ENCODE measurements at regions of chr15 and their contacts with region 1.

Region 1: DNA sequence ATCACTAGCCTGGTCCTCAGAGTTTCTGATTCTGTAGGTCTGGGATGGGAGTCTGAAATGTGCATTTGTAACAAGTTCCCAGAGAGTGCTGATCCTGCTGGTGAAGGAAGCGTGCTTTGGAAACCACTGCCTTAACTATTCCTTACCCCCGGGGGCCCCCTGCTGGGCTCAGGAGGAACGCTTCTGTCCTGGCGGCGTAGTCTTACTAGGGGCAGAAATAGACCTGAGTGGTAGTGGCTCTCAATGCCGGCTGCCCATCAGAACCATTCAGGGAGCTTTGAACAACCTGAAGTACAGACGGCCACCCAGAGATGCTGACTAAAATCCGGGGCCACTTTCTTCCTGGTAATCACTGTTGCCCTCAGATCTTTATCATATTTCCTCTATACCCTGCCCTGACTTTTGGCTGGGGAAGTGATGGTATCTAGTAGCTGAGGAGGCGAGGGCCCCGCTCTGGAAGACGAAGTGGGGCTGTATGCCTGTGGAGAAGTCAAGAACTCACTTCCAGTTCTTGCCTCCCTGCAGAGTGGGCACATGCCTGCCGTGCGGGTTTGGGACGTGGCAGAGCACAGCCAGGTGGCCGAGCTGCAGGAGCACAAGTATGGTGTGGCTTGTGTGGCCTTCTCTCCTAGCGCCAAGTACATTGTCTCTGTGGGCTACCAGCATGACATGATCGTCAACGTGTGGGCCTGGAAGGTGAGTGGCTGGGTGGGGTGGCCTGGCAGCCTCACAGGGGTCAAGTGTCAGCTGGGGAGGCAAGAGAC is 16.3 kb upstream of the JMJD7 start:
- DNase-seq: peak; percentile 70 to 71
- ATAC-seq: peak; percentile 96 to 98; a peak in 5 of 6 replicates
- H3K4me3 ChIP-seq: no peak overlapping the region
- H3K27ac ChIP-seq: no peak overlapping the region
- H3K4me1 ChIP-seq: no peaks in the 10 kb centered on the region
- CTCF ChIP-seq: peak; percentile 69
- EP300 ChIP-seq: no peak
- POLR2A ChIP-seq: no peak
- RAD21 ChIP-seq: peak; percentile 82 to 92

Region 2: DNA sequence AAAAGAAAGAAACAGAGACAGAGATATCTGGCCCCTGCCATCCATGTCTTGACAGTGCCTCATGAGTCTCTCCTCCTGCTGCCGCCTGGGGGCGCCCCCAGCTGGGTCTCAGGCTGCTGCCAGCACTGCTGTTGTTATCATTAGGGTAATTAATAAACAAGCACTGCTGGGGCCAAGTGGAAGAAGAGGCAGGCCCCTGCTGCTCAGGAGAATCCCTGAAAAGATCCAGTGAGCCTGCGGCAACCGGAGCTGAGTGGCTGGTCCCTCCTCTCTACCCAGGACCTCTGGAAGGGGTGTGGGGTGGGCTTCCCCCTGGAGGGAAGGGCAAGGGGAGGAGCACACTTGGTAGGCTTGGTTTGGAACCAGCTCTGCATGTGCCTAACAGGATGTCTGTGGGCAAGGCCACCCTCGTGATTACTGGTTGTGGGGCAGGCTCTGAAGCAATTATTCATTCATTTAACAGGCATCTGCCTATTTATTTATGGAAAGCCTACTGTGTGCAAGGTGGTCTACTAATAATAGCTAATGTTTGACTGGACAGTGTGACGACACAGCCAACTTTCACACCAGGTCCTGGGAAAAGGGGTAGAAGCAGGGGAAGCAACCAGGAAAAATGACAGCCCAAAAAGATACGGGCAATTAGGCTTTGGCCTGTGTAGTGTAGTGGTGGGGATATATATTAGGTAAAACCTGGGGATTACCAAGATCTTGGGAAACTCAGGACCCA is 253.8 kb before region 1 on chr15:
- CTCF ChIA-PET with region 1: interaction called, 17 read pairs
- POLR2A ChIA-PET with region 1: no interaction called
- DNase-seq: peak; percentile 57 to 67
- ATAC-seq: peak; percentile 61 to 89; a peak in 5 of 6 replicates
- H3K4me3 ChIP-seq: peak overlapping the region; percentile 82
- H3K27ac ChIP-seq: peak overlapping the region; percentile 81 to 98; a peak in 2 of 6 replicates
- H3K4me1 ChIP-seq: peaks cover 10% of the 10 kb centered on the region; the same call in 2 of the 3 replicates
- CTCF ChIP-seq: peak; percentile 66
- EP300 ChIP-seq: no peak
- POLR2A ChIP-seq: no peak
- RAD21 ChIP-seq: peak; percentile 58 to 61

Region 3: DNA sequence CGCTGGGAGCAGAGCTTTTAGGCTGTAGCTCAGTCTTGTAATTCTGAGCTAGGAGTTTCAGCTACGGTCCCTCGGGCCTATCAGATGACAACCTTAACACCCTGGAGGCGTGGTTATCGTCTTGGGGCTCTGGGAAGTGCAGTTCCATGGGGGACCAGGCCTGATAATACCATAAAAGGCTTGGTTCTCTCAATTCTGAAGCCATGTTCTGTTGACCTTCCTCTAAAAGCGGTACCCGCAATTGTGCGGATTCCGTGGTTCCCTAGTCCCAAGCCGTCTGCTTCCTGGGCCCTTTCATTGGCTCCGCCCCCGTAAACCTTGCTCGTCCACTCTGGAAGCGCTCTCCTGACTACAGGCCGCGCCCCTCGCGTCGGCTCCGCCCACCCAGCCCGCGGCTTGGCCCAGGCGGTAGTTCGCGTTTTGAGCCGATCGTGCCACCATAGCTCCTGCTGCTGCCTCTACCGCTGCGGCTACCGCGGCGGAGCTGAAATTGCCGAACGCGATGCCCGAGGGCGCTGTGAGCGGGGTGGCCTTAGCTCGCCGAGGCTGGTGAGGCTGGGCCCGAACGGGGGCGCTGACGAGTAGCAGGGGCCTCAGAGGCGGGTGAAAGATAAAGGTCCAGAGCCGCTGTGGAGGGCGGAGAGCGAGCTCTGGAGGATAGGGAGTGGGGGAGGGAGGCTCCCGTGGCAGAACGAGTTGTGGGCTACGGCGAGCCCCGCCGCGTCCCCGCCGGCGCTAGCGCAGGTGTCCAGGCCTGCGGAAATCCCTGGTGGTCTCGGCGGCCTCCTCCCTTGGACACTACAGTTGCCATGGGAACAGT is 37.3 kb before region 1 on chr15 and contains the start of gene MAPKBP1:
- CTCF ChIA-PET with region 1: interaction called, 103 read pairs
- POLR2A ChIA-PET with region 1: interaction called, 4 read pairs
- DNase-seq: peak; percentile 89 to 95
- ATAC-seq: peak; percentile 90 to 95
- H3K4me3 ChIP-seq: peak within 1 kb of the TSS; percentile 76
- H3K27ac ChIP-seq: peak within 1 kb of the TSS; percentile 81 to 96
- H3K4me1 ChIP-seq: peaks cover 22% of the 10 kb centered on the region; the same call in 2 of the 3 replicates
- CTCF ChIP-seq: peak; percentile 58
- EP300 ChIP-seq: no peak
- POLR2A ChIP-seq: peak; percentile 60
- RAD21 ChIP-seq: peak; percentile 41 to 47; a peak in 3 of 5 replicates
- polyA plus RNA-seq, gene MAPKBP1: 2.5 and 4.3 TPM in 2 replicates

Region 4: GRCh38 chr15:41795996-41796856 is 15.4 kb before region 1 on chr15:
- CTCF ChIA-PET with region 1: interaction called, 17 read pairs
- POLR2A ChIA-PET with region 1: no interaction called
- DNase-seq: no peak
- ATAC-seq: no peak
- H3K4me3 ChIP-seq: no peak overlapping the region
- H3K27ac ChIP-seq: no peak overlapping the region
- H3K4me1 ChIP-seq: 0 out of 3 replicates have a peak, but pooled peaks cover 2% of the 10 kb centered on the region
- CTCF ChIP-seq: no peak
- EP300 ChIP-seq: no peak
- POLR2A ChIP-seq: no peak
- RAD21 ChIP-seq: no peak

Measured in A549 (cell line).